ENCODE measurements at regions of chr20 and their contacts with region 1.

Region 1: DNA sequence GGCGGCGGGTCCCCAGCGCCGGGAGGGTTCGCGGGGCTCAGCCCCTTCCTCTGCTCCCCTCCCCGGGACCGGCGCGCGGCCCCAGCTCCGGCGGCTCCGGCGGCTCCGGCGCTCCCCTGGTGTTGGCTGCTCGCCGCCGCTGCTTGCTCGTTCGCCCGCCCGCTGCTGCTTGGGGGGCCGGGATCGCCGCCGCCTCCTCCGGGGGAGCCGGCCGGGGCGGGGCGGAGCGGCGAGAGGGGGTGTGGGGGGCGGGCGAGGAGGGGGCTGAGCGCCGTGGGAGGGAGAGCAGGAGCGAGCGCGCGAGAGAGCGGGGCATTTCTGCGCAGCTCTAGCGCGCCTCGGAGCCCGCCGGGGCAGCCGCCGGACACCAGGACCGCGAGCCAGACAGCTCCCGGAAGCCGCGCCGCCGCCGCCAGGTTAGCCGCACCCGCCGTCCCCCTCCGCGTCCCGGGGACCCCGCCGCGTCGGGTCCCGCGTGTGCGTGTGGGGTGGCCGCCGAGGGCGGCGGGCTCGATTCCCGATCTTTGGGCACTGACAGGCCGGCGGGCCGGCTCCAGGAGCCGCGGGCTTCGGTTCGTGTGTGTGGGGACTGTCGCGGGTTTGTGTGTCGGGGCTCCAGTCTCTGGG is 62.0 kb upstream of the EPB41L1 start:
- DNase-seq: no peak

Region 2: DNA sequence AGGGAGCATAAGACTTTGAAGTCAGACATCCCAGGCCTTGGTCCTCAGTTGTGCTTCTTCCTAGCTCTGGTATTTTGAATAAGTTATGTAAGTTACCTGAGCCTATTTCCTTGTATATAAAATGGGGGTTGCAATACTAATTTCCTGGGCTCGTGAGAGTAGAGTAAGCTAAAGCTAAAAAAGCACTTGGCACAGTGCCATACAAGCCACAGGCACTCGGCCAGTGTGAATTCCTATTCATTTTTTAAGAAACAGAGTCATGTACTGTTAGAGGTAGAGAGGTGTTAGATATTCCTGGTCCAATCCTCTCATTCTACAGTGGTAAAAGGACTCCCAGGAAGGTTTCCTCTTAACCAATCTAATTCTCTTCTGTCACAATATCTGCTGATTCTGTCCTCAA is 17.5 kb before region 1 on chr20:
- intact Hi-C with region 1: loop called in 1 of 2 experiments (anchors 1 kb)
- DNase-seq: no peak

Region 3: GRCh38 chr20:36472637-36473081 is 380.1 kb after region 1 on chr20:
- intact Hi-C with region 1: no loop called
- DNase-seq: no peak

Measured in posterior vena cava (tissue), 2 donors.